Naive thymus-derived CD4-positive, alpha-beta T cell (primary cell): ENCODE measurements at regions of chr12 and their contacts with region 1.

Region 1: GRCh38 chr12:122752464-122753318 is at the start of gene DENR:
- DNase-seq: peak; percentile 98 to 100 (median 99)
- ATAC-seq: peak; percentile 99
- H3K4me3 ChIP-seq: peak within 1 kb of the TSS; percentile 87
- H3K4me3 Mint-ChIP-seq: peak within 1 kb of the TSS; percentile 93 to 100 (median 96)
- H3K27ac ChIP-seq: peak within 1 kb of the TSS; percentile 94
- H3K27ac Mint-ChIP-seq: peak within 1 kb of the TSS; percentile 89 to 98 (median 96)
- H3K4me1 ChIP-seq: peaks cover 12 to 19% of the 10 kb centered on the region in 2 donors
- H3K4me1 Mint-ChIP-seq: peaks cover 31 to 70% (median 60%) of the 10 kb centered on the region in 7 donors
- H3K27me3 ChIP-seq: no peaks in the 10 kb centered on the region
- H3K27me3 Mint-ChIP-seq: no peaks in the 10 kb centered on the region
- total RNA-seq, gene DENR: 29.5 to 65.5 (median 46.1) TPM

Region 2: DNA sequence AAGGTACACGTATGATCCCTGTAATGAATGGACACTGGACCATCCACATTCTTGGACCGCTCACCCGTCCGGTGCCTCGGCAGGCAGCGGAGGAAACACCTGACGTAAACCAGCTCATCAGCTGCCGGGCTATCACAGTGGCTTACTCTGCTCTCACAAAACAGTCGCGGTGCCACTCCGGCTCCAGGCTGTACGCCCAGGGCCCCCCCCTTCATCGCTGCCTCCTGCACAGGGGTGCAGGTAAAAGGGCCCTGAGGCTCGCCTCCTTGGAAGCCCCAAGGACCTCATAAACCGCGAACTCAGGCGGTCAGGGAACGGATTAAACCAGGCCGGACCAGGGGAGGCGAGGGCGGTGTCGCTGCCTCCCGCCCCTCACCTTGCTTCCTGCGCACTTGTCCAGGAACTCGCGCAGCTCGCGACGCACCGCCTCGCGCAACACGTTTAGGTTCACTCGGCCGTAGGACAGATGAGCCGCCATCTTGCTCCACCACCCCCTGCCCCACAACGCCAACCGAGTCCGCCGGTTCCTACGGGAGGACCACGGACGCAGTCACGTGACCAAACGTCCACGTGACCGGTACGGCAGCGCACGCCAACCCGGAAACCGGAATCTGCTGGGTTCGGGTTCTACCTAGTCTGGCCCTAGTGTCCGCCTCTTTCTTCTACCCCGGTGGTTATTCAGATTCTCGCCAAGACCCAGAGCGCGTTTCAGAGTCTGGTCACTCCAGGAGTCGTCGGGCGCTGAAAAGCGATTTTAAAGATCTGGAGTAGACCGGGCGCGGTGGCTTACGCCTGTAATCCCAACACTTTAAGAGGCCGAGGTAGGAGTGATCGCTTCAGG is 486.5 kb before region 1 on chr12 and contains the start of gene VPS33A:
- CTCF ChIA-PET with region 1: no interaction called
- POLR2A ChIA-PET with region 1: no interaction called
- intact Hi-C with region 1: loop called in 1 of 2 experiments (anchors 1 kb)
- DNase-seq: peak; percentile 82 to 96 (median 90)
- ATAC-seq: peak; percentile 89
- H3K4me3 ChIP-seq: peak within 1 kb of the TSS; percentile 74
- H3K4me3 Mint-ChIP-seq: peak within 1 kb of the TSS; percentile 93 to 99 (median 96)
- H3K27ac ChIP-seq: peak within 1 kb of the TSS; percentile 95
- H3K27ac Mint-ChIP-seq: peak within 1 kb of the TSS; percentile 98 to 100 (median 99)
- H3K4me1 ChIP-seq: peaks cover 12 to 17% of the 10 kb centered on the region in 2 donors
- H3K4me1 Mint-ChIP-seq: peaks cover 0 to 37% (median 32%) of the 10 kb centered on the region in 7 donors
- H3K27me3 ChIP-seq: no peaks in the 10 kb centered on the region
- H3K27me3 Mint-ChIP-seq: peaks cover 0 to 6% (median 0%) of the 10 kb centered on the region in 5 donors
- total RNA-seq, gene VPS33A: 19.9 to 34.5 (median 31.4) TPM

Region 3: GRCh38 chr12:122399592-122400373 is 352.9 kb before region 1 on chr12:
- CTCF ChIA-PET with region 1: interaction called, 4 read pairs
- POLR2A ChIA-PET with region 1: interaction called, 3 read pairs
- intact Hi-C with region 1: loop called in 1 of 2 experiments (anchors 1 kb)
- DNase-seq: peak in 8 of 9 donors; percentile 27 to 76 (median 65)
- ATAC-seq: peak; percentile 77
- H3K4me3 ChIP-seq: no peak overlapping the region
- H3K4me3 Mint-ChIP-seq: peak overlapping the region; percentile 40 to 80 (median 69)
- H3K27ac ChIP-seq: peak overlapping the region; percentile 56
- H3K27ac Mint-ChIP-seq: peak overlapping the region; percentile 83 to 96 (median 89)
- H3K4me1 ChIP-seq: peaks cover 0 to 6% of the 10 kb centered on the region in 2 donors
- H3K4me1 Mint-ChIP-seq: peaks cover 24 to 50% (median 39%) of the 10 kb centered on the region in 7 donors
- H3K27me3 ChIP-seq: no peaks in the 10 kb centered on the region
- H3K27me3 Mint-ChIP-seq: no peaks in the 10 kb centered on the region

Region 4: GRCh38 chr12:122730215-122731014 is 22.3 kb before region 1 on chr12 and contains the start of gene HCAR1:
- CTCF ChIA-PET with region 1: no interaction called
- POLR2A ChIA-PET with region 1: no interaction called
- intact Hi-C with region 1: loop called in 1 of 2 experiments (anchors 1 kb)
- DNase-seq: peak in 7 of 9 donors; percentile 5 to 75 (median 48)
- ATAC-seq: peak; percentile 63
- H3K4me3 ChIP-seq: peak within 1 kb of the TSS; percentile 31
- H3K4me3 Mint-ChIP-seq: peak within 1 kb of the TSS; percentile 30 to 78 (median 63)
- H3K27ac ChIP-seq: no peak within 1 kb of the TSS
- H3K27ac Mint-ChIP-seq: peak within 1 kb of the TSS in 8 of 9 donors; percentile 18 to 91 (median 51)
- H3K4me1 ChIP-seq: peaks cover 0 to 25% of the 10 kb centered on the region in 2 donors
- H3K4me1 Mint-ChIP-seq: peaks cover 22 to 80% (median 55%) of the 10 kb centered on the region in 7 donors
- H3K27me3 ChIP-seq: no peaks in the 10 kb centered on the region
- H3K27me3 Mint-ChIP-seq: peaks cover 0 to 4% (median 0%) of the 10 kb centered on the region in 5 donors
- total RNA-seq, gene HCAR1: 0.12 to 2.8 TPM in 2 of 5 experiments, not detected in the others

Region 5: GRCh38 chr12:122834104-122834920 is 81.6 kb after region 1 on chr12:
- CTCF ChIA-PET with region 1: no interaction called
- POLR2A ChIA-PET with region 1: interaction called, 3 read pairs
- intact Hi-C with region 1: loop called in 1 of 2 experiments (anchors 2 kb)
- DNase-seq: peak in 2 of 9 donors; percentile 27 to 33
- ATAC-seq: peak; percentile 30
- H3K4me3 ChIP-seq: peak overlapping the region; percentile 55
- H3K4me3 Mint-ChIP-seq: peak overlapping the region; percentile 85 to 99 (median 92)
- H3K27ac ChIP-seq: peak overlapping the region; percentile 50
- H3K27ac Mint-ChIP-seq: peak overlapping the region; percentile 87 to 98 (median 95)
- H3K4me1 ChIP-seq: peaks cover 0 to 13% of the 10 kb centered on the region in 2 donors
- H3K4me1 Mint-ChIP-seq: peaks cover 30 to 48% (median 44%) of the 10 kb centered on the region in 7 donors
- H3K27me3 ChIP-seq: no peaks in the 10 kb centered on the region
- H3K27me3 Mint-ChIP-seq: peaks cover 0 to 29% (median 0%) of the 10 kb centered on the region in 5 donors

Region 6: DNA sequence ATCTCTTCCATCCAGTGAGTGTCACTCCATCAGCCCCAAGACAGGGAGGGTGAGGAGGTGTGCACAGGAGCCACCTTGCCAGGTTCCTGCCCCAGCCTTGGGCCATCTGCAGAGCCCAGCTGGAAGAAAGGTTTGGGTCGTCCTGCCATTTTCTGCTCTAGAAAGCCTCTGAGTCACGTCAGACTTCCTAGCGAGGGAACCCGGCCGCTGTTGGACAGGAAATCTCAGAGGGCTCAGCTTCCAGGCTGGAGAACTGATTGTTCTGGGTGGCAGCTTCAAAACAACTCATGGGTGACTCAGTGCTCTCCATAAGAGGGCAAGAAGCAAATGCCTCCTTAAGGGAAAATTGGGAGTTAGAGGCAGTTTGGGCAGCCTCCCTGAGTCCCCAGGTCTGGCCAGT is 99.1 kb after region 1 on chr12:
- CTCF ChIA-PET with region 1: no interaction called
- POLR2A ChIA-PET with region 1: no interaction called
- intact Hi-C with region 1: no loop called
- DNase-seq: no peak
- ATAC-seq: no peak
- H3K4me3 ChIP-seq: no peak overlapping the region
- H3K4me3 Mint-ChIP-seq: no peak overlapping the region
- H3K27ac ChIP-seq: no peak overlapping the region
- H3K27ac Mint-ChIP-seq: no peak overlapping the region
- H3K4me1 ChIP-seq: no peaks in the 10 kb centered on the region
- H3K4me1 Mint-ChIP-seq: no peaks in the 10 kb centered on the region
- H3K27me3 ChIP-seq: no peaks in the 10 kb centered on the region
- H3K27me3 Mint-ChIP-seq: no peaks in the 10 kb centered on the region

Region 7: GRCh38 chr12:123713398-123713797 is 960.7 kb after region 1 on chr12:
- CTCF ChIA-PET with region 1: no interaction called
- POLR2A ChIA-PET with region 1: no interaction called
- intact Hi-C with region 1: loop called in 1 of 2 experiments (anchors 5 kb)
- DNase-seq: peak in 2 of 9 donors; percentile 7 to 41
- ATAC-seq: no peak
- H3K4me3 ChIP-seq: peak overlapping the region; percentile 95
- H3K4me3 Mint-ChIP-seq: peak overlapping the region; percentile 81 to 100 (median 90)
- H3K27ac ChIP-seq: peak overlapping the region; percentile 77
- H3K27ac Mint-ChIP-seq: peak overlapping the region; percentile 37 to 93 (median 79)
- H3K4me1 ChIP-seq: peaks cover 11 to 21% of the 10 kb centered on the region in 2 donors
- H3K4me1 Mint-ChIP-seq: peaks cover 28 to 42% (median 38%) of the 10 kb centered on the region in 7 donors
- H3K27me3 ChIP-seq: no peaks in the 10 kb centered on the region
- H3K27me3 Mint-ChIP-seq: no peaks in the 10 kb centered on the region